Dendritic cell treated with granulocyte-macrophage colony-stimulating factor and Interleukin-4, amounts not matched to agents 40 ng/mL and 50 ng/mL, for 4 days (primary cell): ENCODE measurements at regions of chr14 and their contacts with region 1.

Region 1: GRCh38 chr14:34461334-34462131 is 507 bp downstream of the SPTSSA start:
- H3K4me3 Mint-ChIP-seq: peak overlapping the region; percentile 86
- H3K27ac Mint-ChIP-seq: no peak overlapping the region
- H3K4me1 Mint-ChIP-seq: peaks cover 10% of the 10 kb centered on the region
- H3K27me3 Mint-ChIP-seq: no peaks in the 10 kb centered on the region

Region 2: DNA sequence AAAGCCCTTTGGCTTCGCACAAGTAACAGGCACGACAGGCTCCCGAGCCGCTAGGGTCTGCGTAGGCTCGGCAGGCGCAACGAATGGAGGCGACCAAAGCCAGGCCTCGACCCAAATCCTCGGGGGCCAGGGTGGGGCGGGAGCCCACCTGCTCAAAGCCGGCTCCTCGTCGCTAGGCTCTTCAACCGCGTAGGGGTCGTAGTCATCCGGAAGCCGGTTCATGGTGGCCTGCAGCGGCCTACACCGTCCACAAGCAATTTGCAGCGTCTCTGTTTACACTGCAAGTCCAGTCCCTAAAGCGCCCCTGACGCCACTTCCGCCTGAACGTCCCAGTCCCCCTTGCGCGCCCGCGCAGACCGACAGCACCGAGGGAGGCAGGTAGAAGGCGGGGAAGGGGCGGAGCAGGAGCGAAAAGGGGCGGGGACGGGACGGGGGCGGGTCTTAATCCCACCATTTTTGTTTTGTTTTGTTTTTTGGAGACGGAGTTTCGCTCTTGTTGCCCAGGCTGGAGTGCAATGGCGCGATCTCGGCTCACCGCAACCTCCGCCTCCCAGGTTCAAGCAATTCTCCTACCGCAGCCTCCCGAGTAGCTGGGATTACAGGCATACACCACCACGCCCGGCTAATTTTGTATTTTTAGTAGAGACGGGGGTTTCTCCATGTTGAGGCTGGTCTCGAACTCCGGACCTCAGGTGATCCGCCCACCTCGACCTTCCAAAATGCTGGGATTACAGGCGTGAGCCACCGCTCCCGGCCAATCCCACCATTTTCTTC is 78.1 kb after region 1 on chr14 and contains the start of gene EAPP:
- intact Hi-C with region 1: loop called (anchors 5 kb)
- H3K4me3 Mint-ChIP-seq: peak within 1 kb of the TSS; percentile 97
- H3K27ac Mint-ChIP-seq: peak within 1 kb of the TSS; percentile 99
- H3K4me1 Mint-ChIP-seq: peaks cover 9% of the 10 kb centered on the region
- H3K27me3 Mint-ChIP-seq: no peaks in the 10 kb centered on the region